ENCODE measurements at regions of chr17 and their contacts with region 1.

Region 1: DNA sequence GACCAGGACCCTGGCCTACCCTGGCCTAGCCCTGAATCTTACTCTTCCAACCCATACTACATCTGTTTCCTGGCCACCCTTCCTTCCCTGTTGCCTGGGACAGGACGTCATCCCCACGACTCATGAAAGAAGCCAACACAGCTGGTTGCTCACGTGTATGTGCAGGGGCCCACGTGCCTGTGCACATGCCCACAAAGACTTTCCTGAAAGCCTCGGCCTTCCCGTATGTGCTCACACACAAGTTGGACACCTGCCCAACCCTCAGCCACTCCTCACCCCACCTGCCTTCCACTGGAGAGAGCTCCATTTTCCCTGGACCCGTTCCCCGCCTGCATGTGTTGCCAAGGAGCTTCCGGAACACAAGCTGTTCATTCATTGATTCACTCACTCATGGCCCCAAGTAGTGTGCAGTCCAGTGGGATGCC is 7.0 kb downstream of the PLXDC1 start:
- DNase-seq: peak in 3 of 4 donors; percentile 76 to 85 (median 81)
- ATAC-seq: peak; percentile 87
- H3K4me3 ChIP-seq: no peak overlapping the region
- H3K27ac ChIP-seq: no peak overlapping the region
- H3K4me1 ChIP-seq: no peaks in the 10 kb centered on the region
- H3K27me3 ChIP-seq: peaks cover 0 to 9% of the 10 kb centered on the region in 2 donors
- CTCF ChIP-seq: no peak

Region 2: GRCh38 chr17:39077866-39078265 is 66.6 kb before region 1 on chr17:
- intact Hi-C with region 1: loop called in 1 of 2 experiments (anchors 10 kb)
- DNase-seq: no peak
- ATAC-seq: no peak
- H3K4me3 ChIP-seq: no peak overlapping the region
- H3K27ac ChIP-seq: no peak overlapping the region
- H3K4me1 ChIP-seq: peaks cover 2 to 5% of the 10 kb centered on the region in 2 donors
- H3K27me3 ChIP-seq: no peaks in the 10 kb centered on the region
- CTCF ChIP-seq: no peak

Region 3: DNA sequence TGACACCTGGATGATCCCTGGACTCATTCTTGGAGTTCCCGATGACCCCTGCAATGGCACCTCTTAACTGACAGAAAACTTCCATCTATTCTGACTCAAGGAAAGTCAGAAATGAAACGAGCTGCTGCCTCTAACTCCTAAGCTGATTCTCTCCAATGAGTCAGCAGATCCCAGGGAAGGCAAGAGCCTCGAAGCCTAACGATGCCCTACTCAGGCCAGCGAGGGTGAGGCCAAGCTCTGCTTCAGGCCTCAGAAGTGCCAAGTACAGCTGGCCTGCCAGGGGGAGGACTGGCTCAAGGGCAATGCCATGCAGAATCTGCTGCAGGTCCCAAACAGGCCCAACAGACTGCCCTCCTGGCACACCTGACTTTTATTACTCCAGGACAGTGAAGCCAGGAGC is 29.3 kb before region 1 on chr17:
- intact Hi-C with region 1: no loop called
- DNase-seq: no peak
- ATAC-seq: no peak
- H3K4me3 ChIP-seq: no peak overlapping the region
- H3K27ac ChIP-seq: no peak overlapping the region
- H3K4me1 ChIP-seq: peaks cover 0 to 5% of the 10 kb centered on the region in 2 donors
- H3K27me3 ChIP-seq: peaks cover 0 to 16% of the 10 kb centered on the region in 2 donors
- CTCF ChIP-seq: no peak